ENCODE measurements at regions of chrX and their contacts with region 1.

Region 1: DNA sequence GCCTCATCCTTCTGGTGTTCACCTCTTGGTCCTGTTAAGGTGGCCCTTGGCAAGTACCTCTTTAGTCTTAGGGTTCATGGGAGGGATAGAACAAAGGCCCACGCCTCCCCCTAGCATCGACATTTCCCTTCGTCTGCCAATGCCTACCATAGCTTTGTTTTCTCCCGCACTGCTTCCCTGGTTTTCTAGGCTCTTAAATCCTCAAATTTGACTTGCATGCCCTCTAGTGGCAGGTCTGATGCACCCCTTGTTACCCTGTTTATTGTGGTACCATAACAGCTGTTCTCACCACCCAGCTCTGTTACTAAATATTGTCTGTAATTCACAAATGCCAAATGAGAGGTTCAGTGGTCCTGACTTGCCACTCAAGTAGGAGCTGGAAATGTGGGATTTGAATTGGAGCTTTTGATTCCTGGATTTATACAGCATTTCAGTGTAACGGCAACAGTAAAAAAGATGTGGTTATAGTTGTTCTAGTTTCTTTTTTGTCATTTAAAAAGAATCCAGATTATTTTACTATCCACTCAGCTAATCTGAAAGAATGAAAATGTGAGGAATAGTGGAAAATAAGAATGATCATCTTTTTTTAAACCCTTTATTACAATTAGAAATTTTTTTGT is 100.1 kb downstream of the REPS2 start:
- DNase-seq: peak; percentile 43 to 63
- H3K4me3 ChIP-seq: no peak overlapping the region
- H3K4me3 Mint-ChIP-seq: no peak overlapping the region
- H3K27ac Mint-ChIP-seq: no peak overlapping the region
- H3K4me1 ChIP-seq: no peaks in the 10 kb centered on the region
- H3K4me1 Mint-ChIP-seq: no peaks in the 10 kb centered on the region
- H3K27me3 ChIP-seq: no peaks in the 10 kb centered on the region
- H3K27me3 Mint-ChIP-seq: peaks cover 3% of the 10 kb centered on the region
- CTCF ChIP-seq: peak; percentile 59 to 69

Region 2: GRCh38 chrX:16836371-16836770 is 210.2 kb before region 1 on chrX:
- CTCF ChIA-PET with region 1: interaction called, 3 read pairs
- POLR2A ChIA-PET with region 1: no interaction called
- intact Hi-C with region 1: loop called (anchors 5 kb)
- DNase-seq: peak in 1 of 2 experiments; percentile 34
- H3K4me3 ChIP-seq: no peak overlapping the region
- H3K4me3 Mint-ChIP-seq: no peak overlapping the region
- H3K27ac Mint-ChIP-seq: peak overlapping the region; percentile 42
- H3K4me1 ChIP-seq: no peaks in the 10 kb centered on the region
- H3K4me1 Mint-ChIP-seq: no peaks in the 10 kb centered on the region
- H3K27me3 ChIP-seq: no peaks in the 10 kb centered on the region
- H3K27me3 Mint-ChIP-seq: no peaks in the 10 kb centered on the region
- CTCF ChIP-seq: peak; percentile 31 to 57

Region 3: GRCh38 chrX:16882702-16883486 is 163.7 kb before region 1 on chrX:
- CTCF ChIA-PET with region 1: interaction called, 42 read pairs
- POLR2A ChIA-PET with region 1: no interaction called
- intact Hi-C with region 1: loop called (anchors 1 kb)
- DNase-seq: peak; percentile 57 to 59
- H3K4me3 ChIP-seq: peak overlapping the region; percentile 48
- H3K4me3 Mint-ChIP-seq: peak overlapping the region; percentile 73
- H3K27ac Mint-ChIP-seq: no peak overlapping the region
- H3K4me1 ChIP-seq: no peaks in the 10 kb centered on the region
- H3K4me1 Mint-ChIP-seq: no peaks in the 10 kb centered on the region
- H3K27me3 ChIP-seq: no peaks in the 10 kb centered on the region
- H3K27me3 Mint-ChIP-seq: peaks cover 3% of the 10 kb centered on the region
- CTCF ChIP-seq: peak; percentile 47 to 67

Region 4: GRCh38 chrX:17007206-17007683 is 39.3 kb before region 1 on chrX:
- CTCF ChIA-PET with region 1: interaction called, 7 read pairs
- POLR2A ChIA-PET with region 1: no interaction called
- intact Hi-C with region 1: loop called (anchors 1 kb)
- DNase-seq: peak; percentile 1 to 29
- H3K4me3 ChIP-seq: no peak overlapping the region
- H3K4me3 Mint-ChIP-seq: no peak overlapping the region
- H3K27ac Mint-ChIP-seq: no peak overlapping the region
- H3K4me1 ChIP-seq: no peaks in the 10 kb centered on the region
- H3K4me1 Mint-ChIP-seq: no peaks in the 10 kb centered on the region
- H3K27me3 ChIP-seq: no peaks in the 10 kb centered on the region; the same call in 1 of the 2 replicates
- H3K27me3 Mint-ChIP-seq: peaks cover 3% of the 10 kb centered on the region
- CTCF ChIP-seq: peak in 1 of 2 experiments; percentile 33